K562 (cell line): ENCODE measurements at regions of chr22 and their contacts with region 1.

Region 1: DNA sequence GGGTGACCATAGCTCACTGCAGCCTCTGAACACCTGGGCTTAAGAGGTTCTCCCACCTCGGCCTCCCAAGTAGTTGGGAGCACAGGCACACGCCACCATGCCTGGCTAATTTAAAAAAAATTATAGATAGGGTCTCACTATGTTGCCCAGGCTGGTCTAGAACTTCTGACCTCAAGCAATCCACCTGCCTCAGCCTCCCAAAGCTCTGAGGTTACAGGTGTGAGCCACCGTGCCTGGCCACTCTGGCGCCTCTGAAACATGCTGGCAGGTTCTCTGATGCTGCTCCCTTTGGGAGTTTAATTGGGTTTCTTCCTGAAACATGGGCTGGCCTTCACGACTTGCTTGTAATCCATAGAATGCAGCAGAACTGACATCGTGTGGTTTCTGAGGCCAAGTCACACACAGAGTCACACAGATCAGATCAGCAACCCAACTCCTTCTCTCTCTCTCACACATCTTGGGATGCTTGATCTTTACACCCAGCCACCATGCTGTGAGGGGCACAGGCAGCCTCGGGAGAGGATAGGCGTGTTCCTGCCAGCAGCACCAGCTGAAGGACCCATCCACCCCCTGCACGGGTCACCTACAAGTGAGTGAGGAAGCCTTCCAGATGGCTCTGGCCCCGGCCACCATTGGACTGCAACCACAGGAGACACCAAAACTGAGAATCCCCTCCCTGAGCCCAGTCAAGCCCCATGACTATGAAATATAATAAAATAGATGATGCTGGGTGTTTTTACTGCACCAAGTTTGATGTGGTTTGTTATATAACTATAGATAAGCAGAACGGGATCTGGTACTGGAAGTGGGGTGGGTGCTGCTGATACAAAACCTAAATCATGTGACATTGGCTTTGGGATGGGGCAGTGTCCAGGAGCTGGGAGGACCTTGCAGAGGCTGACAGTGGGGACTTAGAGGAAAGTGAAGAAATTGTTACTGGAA is 3.1 kb upstream of the GSC2 start:
- DNase-seq: no peak
- ATAC-seq: peak; percentile 24
- H3K4me3 ChIP-seq: no peak overlapping the region
- H3K27ac ChIP-seq: no peak overlapping the region
- H3K4me1 ChIP-seq: peaks cover 0 to 22% of the 10 kb centered on the region in 2 experiments; a peak in 2 of 5 replicates
- H3K27me3 ChIP-seq: peaks cover 44 to 69% of the 10 kb centered on the region in 2 experiments
- CTCF ChIP-seq: no peak
- EP300 ChIP-seq: no peak
- POLR2A ChIP-seq: no peak
- RAD21 ChIP-seq: no peak

Region 2: GRCh38 chr22:18935889-18936529 is 217.2 kb before region 1 on chr22 and contains the start of gene PRODH:
- CTCF ChIA-PET with region 1: no interaction called
- POLR2A ChIA-PET with region 1: no interaction called
- in situ Hi-C with region 1: no loop called
- intact Hi-C with region 1: no loop called
- DNase-seq: no peak
- ATAC-seq: peak; percentile 81
- H3K4me3 ChIP-seq: no peak within 1 kb of the TSS
- H3K27ac ChIP-seq: no peak within 1 kb of the TSS
- H3K4me1 ChIP-seq: no peaks in the 10 kb centered on the region
- H3K27me3 ChIP-seq: no peaks in the 10 kb centered on the region
- CTCF ChIP-seq: no peak
- EP300 ChIP-seq: no peak
- POLR2A ChIP-seq: no peak
- RAD21 ChIP-seq: no peak
- polyA plus RNA-seq, gene PRODH: not detected

Region 3: GRCh38 chr22:19168211-19168890 is 15.1 kb after region 1 on chr22:
- CTCF ChIA-PET with region 1: no interaction called
- POLR2A ChIA-PET with region 1: interaction called, 64 read pairs
- in situ Hi-C with region 1: no loop called
- intact Hi-C with region 1: no loop called
- DNase-seq: peak in 3 of 4 experiments; percentile 77 to 83 (median 78)
- ATAC-seq: peak; percentile 13
- H3K4me3 ChIP-seq: no peak overlapping the region
- H3K27ac ChIP-seq: no peak overlapping the region
- H3K4me1 ChIP-seq: peaks cover 29 to 52% of the 10 kb centered on the region in 2 experiments
- H3K27me3 ChIP-seq: peaks cover 29 to 44% of the 10 kb centered on the region in 2 experiments
- CTCF ChIP-seq: peak; percentile 82 to 99 (median 90)
- EP300 ChIP-seq: peak; percentile 20; the same call in 1 of the 2 replicates
- POLR2A ChIP-seq: no peak
- RAD21 ChIP-seq: peak in 1 of 2 experiments; percentile 55; a peak in 2 of 4 replicates

Region 4: DNA sequence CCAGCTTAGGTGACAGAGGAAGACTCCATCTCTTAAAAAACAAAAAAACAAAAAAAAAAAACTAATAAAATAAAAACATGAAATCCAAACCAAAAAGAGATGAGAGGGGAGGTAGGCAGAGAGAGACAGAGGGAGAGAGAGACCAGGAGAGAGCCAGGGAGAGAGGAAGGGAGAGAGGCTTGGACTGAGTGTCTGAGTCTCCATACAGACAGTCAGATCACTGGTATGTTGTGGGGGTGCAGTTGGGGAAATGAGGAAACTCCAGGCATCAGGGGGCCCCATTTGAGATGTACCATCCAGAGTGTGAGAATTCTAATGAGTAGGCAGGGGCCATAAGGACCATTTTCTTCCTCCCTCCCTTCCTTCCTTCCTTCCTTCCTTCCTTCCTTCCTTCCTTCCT is 507.9 kb after region 1 on chr22:
- CTCF ChIA-PET with region 1: no interaction called
- POLR2A ChIA-PET with region 1: no interaction called
- in situ Hi-C with region 1: no loop called
- intact Hi-C with region 1: no loop called
- DNase-seq: peak in 2 of 4 experiments; percentile 30 to 33
- ATAC-seq: no peak
- H3K4me3 ChIP-seq: no peak overlapping the region
- H3K27ac ChIP-seq: no peak overlapping the region
- H3K4me1 ChIP-seq: peaks cover 13 to 21% of the 10 kb centered on the region in 2 experiments; a peak in 4 of 5 replicates
- H3K27me3 ChIP-seq: peaks cover 33 to 36% of the 10 kb centered on the region in 2 experiments
- CTCF ChIP-seq: no peak
- EP300 ChIP-seq: no peak
- POLR2A ChIP-seq: no peak
- RAD21 ChIP-seq: no peak